Activated T-helper 1 cell treated with anti-CD3 and anti-CD28 coated beads, Interleukin-12 subunit alpha, Interleukin-12 subunit beta, Interleukin-2, Interleukin-4 antibody, amounts not matched to agents 30 ng/mL and 10 ng/mL and 1 ng/mL, durations not matched to agents 14 hours and 24 hours and 36 hours (primary cell): ENCODE measurements at regions of chr16 and their contacts with region 1.

Region 1: DNA sequence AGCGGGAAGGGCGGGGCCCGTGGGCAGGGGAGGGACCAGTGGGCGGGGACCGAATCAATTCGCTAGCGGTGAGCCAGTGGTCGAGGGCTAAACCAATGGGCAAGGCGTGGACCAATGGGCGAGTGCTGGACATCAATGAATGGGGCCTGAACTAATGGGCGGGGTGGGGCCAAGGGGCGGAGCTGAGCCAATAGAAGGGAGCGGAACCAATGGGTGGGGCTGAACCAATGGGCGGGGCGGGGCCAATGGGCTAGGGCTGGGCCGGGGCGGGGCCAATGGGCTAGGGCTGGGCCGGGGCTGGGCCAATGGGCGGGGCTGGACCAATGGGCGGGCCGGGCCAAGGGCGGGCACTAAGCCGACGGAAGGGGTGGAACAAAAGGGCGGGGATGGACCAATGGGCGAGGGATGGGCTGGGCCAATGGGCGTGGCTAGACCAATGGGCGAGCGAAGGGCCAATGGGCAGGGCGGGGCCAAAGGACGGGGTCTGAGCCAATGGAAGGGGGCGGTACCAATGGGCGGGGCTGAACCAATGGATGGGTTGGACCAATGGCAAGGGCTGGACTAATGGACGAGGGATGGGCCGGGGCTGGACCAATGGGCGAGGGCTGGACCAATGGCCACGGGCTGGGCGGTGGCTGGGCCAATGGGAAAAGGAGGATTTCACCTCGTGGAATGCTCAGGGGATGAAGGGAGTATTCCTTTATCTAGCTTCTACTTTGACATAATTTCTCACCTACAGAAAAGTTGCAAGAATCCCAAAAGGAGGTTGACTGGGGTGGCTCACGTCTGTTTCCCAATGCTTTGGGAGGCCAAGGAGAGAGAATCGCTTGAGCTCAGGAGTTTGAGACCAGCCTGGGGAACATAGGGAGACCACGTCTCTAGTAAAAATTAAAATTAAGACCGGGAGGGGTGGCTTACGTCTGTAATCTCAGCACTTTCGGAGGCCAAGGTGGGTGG is 6.0 kb upstream of the FLYWCH1 start:
- DNase-seq: peak; percentile 95
- H3K4me3 Mint-ChIP-seq: peak overlapping the region; percentile 91
- H3K27ac Mint-ChIP-seq: peak overlapping the region; percentile 44
- H3K4me1 Mint-ChIP-seq: peaks cover 17% of the 10 kb centered on the region
- H3K27me3 Mint-ChIP-seq: peaks cover 4% of the 10 kb centered on the region

Region 2: DNA sequence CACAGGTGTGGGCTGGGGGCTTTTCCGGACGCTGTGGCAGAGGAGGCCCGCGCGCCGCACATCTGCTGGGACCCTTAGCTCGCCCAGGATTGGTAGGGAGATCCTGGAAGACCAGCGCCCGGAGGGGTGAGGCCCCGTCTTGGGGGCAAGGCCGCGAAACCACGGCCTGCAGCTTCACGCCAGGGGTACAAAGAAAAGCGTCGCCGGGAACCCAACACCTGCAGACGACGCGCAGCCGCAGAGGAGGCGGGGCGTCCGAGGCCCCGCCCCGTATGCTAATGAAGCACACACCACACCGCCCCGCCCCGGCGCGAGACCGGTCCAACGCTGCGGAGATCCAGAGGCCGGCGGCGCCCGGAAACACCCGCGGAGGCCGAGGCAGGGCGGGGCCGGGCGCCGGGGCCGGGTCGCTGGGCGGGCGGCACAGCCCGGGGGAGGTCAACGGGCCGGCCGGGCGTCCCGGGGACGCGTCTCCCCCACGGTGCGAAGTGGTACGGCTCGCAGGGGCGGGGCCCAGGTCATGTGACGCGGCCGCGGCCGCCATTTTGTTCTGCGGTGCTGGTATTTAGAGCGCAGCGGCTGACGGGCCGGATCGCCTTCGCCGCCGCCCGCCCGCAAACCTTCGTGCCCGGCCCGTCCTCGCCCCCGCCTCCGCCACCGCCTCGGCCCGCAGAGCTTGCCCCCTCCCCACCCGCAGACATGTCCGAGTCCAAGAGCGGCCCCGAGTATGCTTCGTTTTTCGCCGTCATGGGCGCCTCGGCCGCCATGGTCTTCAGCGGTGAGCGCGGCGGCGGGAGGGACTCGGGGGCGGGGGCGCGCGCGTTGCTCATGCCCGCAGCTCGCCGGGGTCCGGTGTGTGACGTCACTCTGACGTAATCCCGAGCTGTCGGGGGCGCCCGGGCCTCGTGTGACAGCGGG is 392.0 kb before region 1 on chr16 and contains the start of gene ATP6V0C:
- intact Hi-C with region 1: loop called (anchors 10 kb)
- DNase-seq: peak; percentile 88
- H3K4me3 Mint-ChIP-seq: peak within 1 kb of the TSS; percentile 91
- H3K27ac Mint-ChIP-seq: peak within 1 kb of the TSS; percentile 93
- H3K4me1 Mint-ChIP-seq: peaks cover 38% of the 10 kb centered on the region
- H3K27me3 Mint-ChIP-seq: peaks cover 6% of the 10 kb centered on the region
- total RNA-seq, gene ATP6V0C: 117 and 119 TPM in 2 replicates

Region 3: DNA sequence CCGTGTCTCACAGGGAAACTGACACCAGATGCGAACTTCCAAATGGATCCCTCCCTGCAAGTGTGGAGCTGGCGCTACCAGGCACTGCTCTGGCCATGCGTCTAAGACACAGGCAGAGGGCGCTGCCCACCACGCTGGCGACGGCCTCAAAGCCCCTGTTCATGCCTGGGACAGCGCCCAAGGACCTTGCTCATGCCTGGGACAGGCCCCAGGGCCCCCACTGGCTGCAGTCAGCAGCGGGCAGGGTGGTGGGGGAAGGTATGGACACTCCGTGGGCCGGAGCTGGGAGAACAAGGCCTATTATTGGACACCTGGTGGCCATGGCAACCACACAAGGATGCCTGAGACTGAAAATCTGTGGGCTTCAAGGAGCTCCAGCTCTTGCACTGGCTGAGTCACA is 66.8 kb before region 1 on chr16:
- intact Hi-C with region 1: loop called (anchors 2 kb)
- DNase-seq: peak; percentile 19
- H3K4me3 Mint-ChIP-seq: no peak overlapping the region
- H3K27ac Mint-ChIP-seq: peak overlapping the region; percentile 64
- H3K4me1 Mint-ChIP-seq: peaks cover 12% of the 10 kb centered on the region
- H3K27me3 Mint-ChIP-seq: peaks cover 3% of the 10 kb centered on the region

Region 4: GRCh38 chr16:2883027-2883851 is 22.5 kb before region 1 on chr16 and contains the start of gene FLYWCH2:
- intact Hi-C with region 1: loop called (anchors 1 kb)
- DNase-seq: peak; percentile 100
- H3K4me3 Mint-ChIP-seq: peak within 1 kb of the TSS; percentile 88
- H3K27ac Mint-ChIP-seq: peak within 1 kb of the TSS; percentile 95
- H3K4me1 Mint-ChIP-seq: peaks cover 16% of the 10 kb centered on the region
- H3K27me3 Mint-ChIP-seq: no peaks in the 10 kb centered on the region
- total RNA-seq, gene FLYWCH2: 22.9 and 25.4 TPM in 2 replicates

Region 5: DNA sequence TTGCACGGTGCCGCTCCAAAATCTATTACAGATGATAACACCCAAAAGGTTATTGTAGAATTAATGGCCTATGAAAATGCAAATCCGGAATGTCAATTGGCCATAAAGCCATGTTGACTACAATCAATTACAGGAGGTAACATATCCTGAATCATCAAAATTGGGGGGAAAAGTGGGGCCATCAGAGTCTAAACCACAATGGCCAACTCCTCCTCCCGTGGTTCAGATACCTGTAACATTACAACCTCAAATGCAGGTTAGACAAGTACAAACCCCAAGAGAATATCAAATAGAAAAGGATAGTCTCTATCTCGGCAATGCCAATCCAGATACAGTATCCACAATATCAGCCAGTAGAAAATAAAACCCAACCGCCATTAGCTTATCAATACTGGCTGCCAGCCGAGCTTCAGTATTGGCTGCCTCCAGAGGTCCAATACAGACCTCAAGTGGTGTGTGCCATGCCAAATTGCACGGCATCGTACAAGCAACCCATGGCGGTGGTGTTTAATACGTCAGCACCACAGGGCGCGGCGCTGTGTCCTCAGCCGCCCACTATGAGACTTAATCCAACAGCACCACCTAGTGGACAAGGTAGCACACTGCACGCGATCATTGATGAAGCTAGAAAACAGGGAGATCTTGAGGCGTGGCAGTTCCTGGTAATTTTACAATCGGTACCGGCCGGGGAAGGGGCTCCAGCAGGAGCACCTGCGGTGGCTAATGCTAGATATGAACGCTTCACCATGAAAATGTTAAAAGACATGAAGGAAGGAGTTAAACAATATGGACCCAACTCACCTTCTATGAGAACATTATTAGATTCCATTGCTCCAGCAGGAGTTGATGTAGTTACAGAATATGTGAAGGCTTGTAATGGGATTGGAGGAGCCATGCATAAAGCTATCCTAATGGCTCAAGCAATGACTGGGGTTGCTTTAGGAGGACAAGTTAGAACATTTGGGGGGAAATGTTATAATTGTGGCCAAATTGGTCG is 21.2 kb after region 1 on chr16:
- intact Hi-C with region 1: loop called (anchors 1 kb)
- DNase-seq: peak; percentile 83
- H3K4me3 Mint-ChIP-seq: no peak overlapping the region
- H3K27ac Mint-ChIP-seq: no peak overlapping the region
- H3K4me1 Mint-ChIP-seq: peaks cover 23% of the 10 kb centered on the region
- H3K27me3 Mint-ChIP-seq: no peaks in the 10 kb centered on the region

Region 6: GRCh38 chr16:3023669-3024478 is 118.2 kb after region 1 on chr16 and contains the starts of genes HCFC1R1 and THOC6:
- intact Hi-C with region 1: loop called (anchors 2 kb)
- DNase-seq: peak; percentile 94
- H3K4me3 Mint-ChIP-seq: peak within 1 kb of the TSS; percentile 84
- H3K27ac Mint-ChIP-seq: peak within 1 kb of the TSS; percentile 91
- H3K4me1 Mint-ChIP-seq: peaks cover 36% of the 10 kb centered on the region
- H3K27me3 Mint-ChIP-seq: peaks cover 1% of the 10 kb centered on the region
- total RNA-seq, gene HCFC1R1: 30.0 and 30.9 TPM in 2 replicates
- total RNA-seq, gene THOC6: 48.3 and 49.0 TPM in 2 replicates